ENCODE measurements at regions of chr10 and their contacts with region 1.

Region 1: DNA sequence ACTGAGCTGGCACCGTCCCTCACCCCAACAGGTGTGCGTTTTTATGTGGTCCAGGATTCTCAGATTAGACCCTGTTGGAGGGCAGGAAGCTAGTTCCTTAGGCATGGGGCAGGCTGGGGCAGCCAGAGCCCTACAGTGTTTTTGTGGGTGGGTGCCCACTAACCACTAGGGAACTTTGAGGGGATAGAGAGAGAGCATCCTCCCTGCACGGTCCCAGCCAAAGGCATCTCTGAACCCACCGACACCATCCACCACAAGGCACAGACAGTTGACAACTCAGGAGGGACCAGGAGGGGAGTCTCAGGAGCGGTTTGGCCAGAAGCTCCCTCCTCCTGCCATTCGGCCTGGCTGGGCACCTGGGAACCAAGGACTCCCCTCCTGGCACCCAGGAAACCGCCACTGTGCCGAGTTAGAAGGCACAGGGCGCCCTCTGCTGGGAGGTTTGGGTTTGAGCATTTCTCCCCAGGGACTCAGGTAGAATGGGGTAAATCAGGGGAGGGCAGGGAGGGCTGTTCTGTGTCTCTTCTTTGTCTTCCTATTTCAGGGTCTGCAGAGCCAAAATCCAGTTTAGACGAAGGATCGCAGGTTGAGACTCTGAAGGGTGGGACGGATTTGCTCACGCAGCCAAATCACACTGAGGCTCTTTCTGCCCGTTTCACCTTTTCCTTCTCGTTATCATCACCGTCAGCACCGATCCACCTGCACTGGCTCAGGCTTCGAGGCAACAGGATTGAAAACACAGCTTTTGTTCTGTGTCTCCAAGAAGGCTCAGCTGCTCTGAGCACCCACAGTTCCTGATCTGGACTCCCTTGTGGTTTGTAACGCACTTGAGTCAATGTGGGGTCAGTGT is 84.8 kb upstream of the COL13A1 start:
- ATAC-seq: peak in 5 of 8 experiments; percentile 41 to 94 (median 49)
- H3K4me3 ChIP-seq: no peak overlapping the region
- H3K27ac ChIP-seq: no peak overlapping the region
- H3K4me1 ChIP-seq: peaks cover 9 to 14% of the 10 kb centered on the region in 2 donors

Region 2: DNA sequence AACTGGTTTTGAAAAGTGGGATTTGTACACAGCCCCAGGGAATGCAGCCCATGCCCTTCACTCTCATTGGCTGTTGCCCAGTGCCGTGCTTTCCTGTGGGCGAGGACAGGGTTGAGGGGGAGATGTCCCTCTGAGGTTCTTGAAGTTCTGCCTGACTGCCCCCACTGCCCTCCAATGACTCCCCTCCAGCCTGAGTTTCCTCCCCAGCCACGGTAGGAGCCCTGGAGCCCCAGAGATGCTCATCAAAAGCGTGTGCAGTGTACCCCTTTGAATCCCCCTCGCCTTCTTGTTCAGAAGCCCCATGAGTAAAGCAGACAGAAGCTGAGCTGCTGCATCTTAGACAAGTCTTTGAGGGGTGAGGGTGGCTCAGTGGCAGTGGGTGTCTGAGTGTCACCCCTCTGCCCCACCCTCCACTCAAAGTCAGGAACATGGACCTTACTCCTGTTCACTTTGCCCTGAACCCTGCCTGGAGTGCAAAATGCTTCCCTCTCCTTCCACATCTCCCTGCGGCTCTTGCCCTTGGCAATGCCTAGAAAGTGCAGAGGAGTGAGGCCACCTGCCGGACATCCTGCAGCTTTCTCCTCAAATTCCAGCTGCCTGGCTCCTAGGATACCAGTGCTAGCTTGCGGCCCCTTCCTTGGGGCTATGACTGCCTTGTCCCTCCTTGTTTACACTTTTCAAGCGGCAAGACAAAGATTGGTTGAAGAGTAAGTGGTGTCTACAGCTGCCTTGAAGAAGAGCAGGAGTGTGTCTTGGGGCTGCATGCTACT is 67.0 kb before region 1 on chr10:
- in situ Hi-C with region 1: loop called in 1 of 9 experiments (anchors 10 kb)
- ATAC-seq: peak in 4 of 8 experiments; percentile 14 to 64 (median 50)
- H3K4me3 ChIP-seq: no peak overlapping the region
- H3K27ac ChIP-seq: no peak overlapping the region
- H3K4me1 ChIP-seq: peaks cover 47 to 62% of the 10 kb centered on the region in 2 donors

Region 3: GRCh38 chr10:69807122-69807521 is 90.2 kb after region 1 on chr10:
- in situ Hi-C with region 1: no loop called
- ATAC-seq: peak in 1 of 8 experiments; percentile 7
- H3K4me3 ChIP-seq: no peak overlapping the region
- H3K27ac ChIP-seq: no peak overlapping the region
- H3K4me1 ChIP-seq: peaks cover 7 to 13% of the 10 kb centered on the region in 2 donors